Naive thymus-derived CD8-positive, alpha-beta T cell (primary cell): ENCODE measurements at regions of chr3 and their contacts with region 1.

Region 1: DNA sequence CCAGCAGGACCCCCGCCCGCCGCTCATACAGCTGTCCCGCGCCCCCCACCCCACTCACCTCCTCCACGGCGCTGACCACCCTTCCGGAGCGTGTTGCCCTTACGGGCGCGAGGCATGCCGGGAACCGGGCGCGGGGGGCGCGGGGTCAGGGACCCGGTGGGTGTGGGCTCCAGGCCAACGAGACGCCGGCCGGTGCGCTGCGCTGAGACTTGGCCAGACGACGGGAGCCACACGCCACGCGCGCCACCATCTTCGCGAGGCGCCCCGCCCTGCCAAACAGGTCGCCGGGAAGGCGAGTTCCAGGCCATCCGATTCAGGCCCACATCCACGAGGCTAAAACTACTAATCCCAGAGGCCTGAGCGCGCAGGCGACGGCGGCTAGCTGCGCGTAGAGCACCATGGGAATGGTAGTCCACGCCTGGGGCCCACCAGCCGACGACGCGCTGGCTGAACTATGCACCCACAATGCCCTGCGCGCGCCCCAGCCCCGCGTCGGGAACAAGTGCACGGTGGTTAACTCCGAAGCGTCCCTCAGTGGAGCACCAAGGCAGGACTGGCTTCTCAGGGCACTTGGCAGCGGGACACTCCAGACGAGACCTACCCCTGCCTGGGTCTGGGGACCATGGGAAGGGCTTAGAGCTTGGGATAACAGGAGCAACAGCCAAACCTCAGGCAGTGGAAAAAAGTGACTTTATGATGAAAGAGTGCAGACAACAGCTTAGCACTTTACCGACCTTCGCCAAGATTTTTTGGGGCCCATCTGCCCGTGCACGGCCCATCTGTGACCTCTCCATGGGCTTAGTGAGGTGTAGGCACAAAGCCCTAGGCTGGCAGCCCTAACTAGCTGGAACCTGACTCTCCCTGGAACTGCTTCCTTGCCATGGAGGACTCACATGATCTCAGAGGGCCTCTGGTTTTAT is at the start of gene IFRD2:
- DNase-seq: peak; percentile 87 to 97 (median 94)
- ATAC-seq: peak; percentile 98 to 99
- H3K4me3 Mint-ChIP-seq: peak within 1 kb of the TSS; percentile 82 to 95 (median 90)
- H3K27ac Mint-ChIP-seq: peak within 1 kb of the TSS; percentile 93 to 99 (median 98)
- H3K4me1 Mint-ChIP-seq: peaks cover 16 to 31% (median 18%) of the 10 kb centered on the region in 4 donors
- H3K27me3 Mint-ChIP-seq: no peaks in the 10 kb centered on the region
- polyA plus RNA-seq, gene IFRD2: 59.4 to 69.7 (median 60.7) TPM

Region 2: GRCh38 chr3:50235716-50236496 is 56.5 kb before region 1 on chr3 and contains the start of gene GNAI2:
- POLR2A ChIA-PET with region 1: interaction called, 15 read pairs
- DNase-seq: peak; percentile 93 to 100 (median 99)
- ATAC-seq: peak; percentile 88 to 91
- H3K4me3 Mint-ChIP-seq: peak within 1 kb of the TSS; percentile 94 to 99 (median 98)
- H3K27ac Mint-ChIP-seq: peak within 1 kb of the TSS; percentile 93 to 98 (median 96)
- H3K4me1 Mint-ChIP-seq: peaks cover 21 to 56% (median 45%) of the 10 kb centered on the region in 4 donors
- H3K27me3 Mint-ChIP-seq: no peaks in the 10 kb centered on the region
- polyA plus RNA-seq, gene GNAI2: 405 to 534 (median 417) TPM

Region 3: DNA sequence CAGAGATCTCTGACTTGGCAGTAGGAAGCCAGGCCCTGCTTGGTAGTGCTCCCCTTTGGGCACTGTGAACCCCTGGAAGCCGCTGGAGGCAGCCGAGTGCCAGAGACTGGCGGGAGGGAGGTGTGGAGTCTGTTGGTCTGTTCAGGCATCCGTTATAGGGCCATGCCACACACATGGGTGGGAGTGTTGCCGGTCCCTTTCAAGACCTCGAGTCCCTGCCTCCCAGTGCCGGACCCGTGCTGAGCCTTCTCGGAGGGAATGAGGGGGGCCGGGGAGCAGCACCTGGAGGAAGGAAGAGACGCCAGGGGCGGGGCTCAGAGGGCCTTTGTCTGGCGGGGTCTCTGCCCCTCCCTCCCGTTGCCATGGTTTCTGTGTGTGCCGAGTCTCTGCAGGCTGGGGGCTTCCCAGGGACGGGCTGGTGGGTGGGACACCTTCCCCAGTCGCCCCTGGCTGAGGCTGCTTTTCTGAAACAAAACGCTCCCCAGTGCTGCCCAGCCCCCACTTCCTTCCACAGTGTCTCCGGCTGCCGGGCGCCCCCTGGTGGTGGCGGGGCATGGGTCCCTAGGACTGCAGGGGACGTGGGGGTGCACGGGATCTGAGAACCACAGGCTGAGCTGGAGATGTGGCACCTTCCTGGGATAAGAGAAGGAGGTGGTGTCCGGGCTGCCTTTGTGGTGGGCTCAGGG is 46.4 kb before region 1 on chr3:
- POLR2A ChIA-PET with region 1: interaction called, 12 read pairs
- DNase-seq: peak; percentile 92 to 99 (median 95)
- ATAC-seq: peak; percentile 83 to 87
- H3K4me3 Mint-ChIP-seq: peak overlapping the region; percentile 72 to 89 (median 83)
- H3K27ac Mint-ChIP-seq: peak overlapping the region; percentile 43 to 97 (median 95)
- H3K4me1 Mint-ChIP-seq: peaks cover 34 to 90% (median 82%) of the 10 kb centered on the region in 4 donors
- H3K27me3 Mint-ChIP-seq: no peaks in the 10 kb centered on the region

Region 4: DNA sequence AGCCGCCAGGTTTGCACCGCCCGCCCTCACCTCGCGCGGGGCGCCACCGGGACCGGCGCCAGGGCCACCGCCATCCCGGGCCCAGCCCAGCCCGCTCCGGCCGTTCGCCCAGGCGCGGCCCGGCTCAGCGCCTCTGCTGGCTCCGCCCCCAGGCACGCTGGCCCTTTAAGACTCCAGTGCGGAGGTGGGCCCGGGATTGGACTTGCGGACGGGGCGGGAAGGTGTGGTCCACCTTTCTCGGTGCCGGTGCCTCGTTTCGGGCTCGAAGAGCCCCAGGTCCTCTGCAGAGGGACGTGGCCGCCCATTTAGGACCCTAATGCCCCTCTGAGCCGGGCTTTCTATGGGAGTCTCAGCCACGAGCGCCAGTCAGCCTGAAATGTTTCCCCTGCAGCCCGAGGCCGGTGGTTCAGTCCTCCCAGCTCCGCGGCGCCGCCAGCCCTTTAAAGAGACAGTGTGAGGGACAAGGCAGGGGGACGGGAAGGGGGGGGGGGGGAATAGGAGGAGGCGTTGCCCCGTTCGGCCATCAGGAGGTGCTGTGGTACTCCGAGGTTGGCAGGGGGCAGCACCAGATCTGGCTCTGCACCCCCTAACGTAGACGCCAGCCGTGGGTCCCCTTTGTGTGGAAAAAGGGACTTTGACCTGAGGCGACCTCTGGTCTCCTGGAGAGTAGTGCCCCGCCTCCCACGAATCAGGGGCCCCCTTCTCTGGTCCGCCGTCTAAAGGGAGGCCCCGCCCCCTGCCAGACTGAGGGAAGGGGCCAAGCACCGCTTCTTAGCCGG is 29.1 kb after region 1 on chr3:
- POLR2A ChIA-PET with region 1: interaction called, 16 read pairs
- DNase-seq: peak; percentile 70 to 90 (median 78)
- ATAC-seq: peak; percentile 74 to 78
- H3K4me3 Mint-ChIP-seq: peak overlapping the region; percentile 79 to 92 (median 86)
- H3K27ac Mint-ChIP-seq: peak overlapping the region; percentile 73 to 97 (median 93)
- H3K4me1 Mint-ChIP-seq: peaks cover 18 to 56% (median 45%) of the 10 kb centered on the region in 4 donors
- H3K27me3 Mint-ChIP-seq: no peaks in the 10 kb centered on the region

Region 5: GRCh38 chr3:50327943-50328691 is 35.7 kb after region 1 on chr3 and contains the start of gene TUSC2:
- POLR2A ChIA-PET with region 1: interaction called, 13 read pairs
- DNase-seq: peak; percentile 89 to 97 (median 92)
- ATAC-seq: peak; percentile 93 to 96
- H3K4me3 Mint-ChIP-seq: peak within 1 kb of the TSS; percentile 84 to 97 (median 94)
- H3K27ac Mint-ChIP-seq: peak within 1 kb of the TSS; percentile 85 to 97 (median 95)
- H3K4me1 Mint-ChIP-seq: peaks cover 6 to 38% (median 34%) of the 10 kb centered on the region in 4 donors
- H3K27me3 Mint-ChIP-seq: no peaks in the 10 kb centered on the region
- polyA plus RNA-seq, gene TUSC2: 48.4 to 54.3 (median 53.7) TPM

Region 6: GRCh38 chr3:50350527-50351322 is 58.3 kb after region 1 on chr3 and contains the starts of genes CYB561D2 and NPRL2:
- POLR2A ChIA-PET with region 1: interaction called, 17 read pairs
- DNase-seq: peak; percentile 97 to 99 (median 99)
- ATAC-seq: peak; percentile 89 to 90
- H3K4me3 Mint-ChIP-seq: peak within 1 kb of the TSS; percentile 94 to 99 (median 97)
- H3K27ac Mint-ChIP-seq: peak within 1 kb of the TSS; percentile 98 to 100 (median 99)
- H3K4me1 Mint-ChIP-seq: peaks cover 34 to 82% (median 68%) of the 10 kb centered on the region in 4 donors
- H3K27me3 Mint-ChIP-seq: no peaks in the 10 kb centered on the region
- polyA plus RNA-seq, gene CYB561D2: 45.5 to 48.2 (median 47.7) TPM
- polyA plus RNA-seq, gene NPRL2: 36.2 to 45.3 (median 36.4) TPM